Transverse colon (tissue), 4 donors: ENCODE measurements at regions of chr1 and their contacts with region 1.

Region 1: DNA sequence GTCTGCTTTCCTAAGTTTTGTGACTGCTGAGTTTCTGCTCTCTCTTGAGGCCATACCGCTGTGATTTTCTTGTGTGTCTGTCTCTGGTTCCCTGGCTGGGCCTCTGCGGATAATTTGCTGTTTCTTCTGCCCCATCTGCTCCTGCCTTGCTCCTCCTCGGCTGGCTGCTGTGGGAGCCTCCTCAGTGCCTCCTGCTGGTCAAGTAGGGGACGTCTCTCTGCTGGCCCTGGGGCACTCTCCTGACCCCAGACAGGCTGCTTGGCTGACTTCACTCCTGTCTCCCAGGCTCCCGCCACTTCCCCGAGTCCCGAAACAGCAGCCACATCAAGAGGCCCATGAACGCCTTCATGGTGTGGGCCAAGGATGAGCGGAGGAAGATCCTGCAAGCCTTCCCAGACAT is 28.5 kb downstream of the ETNK2 start:
- DNase-seq: peak; percentile 27
- H3K4me3 ChIP-seq: no peak overlapping the region
- H3K27ac ChIP-seq: no peak overlapping the region
- H3K4me1 ChIP-seq: peaks cover 0 to 15% (median 5%) of the 10 kb centered on the region in 4 donors
- H3K27me3 ChIP-seq: no peaks in the 10 kb centered on the region
- CTCF ChIP-seq: peak in 4 of 5 experiments; percentile 31 to 50 (median 37)
- EP300 ChIP-seq: no peak
- POLR2A ChIP-seq: no peak

Region 2: DNA sequence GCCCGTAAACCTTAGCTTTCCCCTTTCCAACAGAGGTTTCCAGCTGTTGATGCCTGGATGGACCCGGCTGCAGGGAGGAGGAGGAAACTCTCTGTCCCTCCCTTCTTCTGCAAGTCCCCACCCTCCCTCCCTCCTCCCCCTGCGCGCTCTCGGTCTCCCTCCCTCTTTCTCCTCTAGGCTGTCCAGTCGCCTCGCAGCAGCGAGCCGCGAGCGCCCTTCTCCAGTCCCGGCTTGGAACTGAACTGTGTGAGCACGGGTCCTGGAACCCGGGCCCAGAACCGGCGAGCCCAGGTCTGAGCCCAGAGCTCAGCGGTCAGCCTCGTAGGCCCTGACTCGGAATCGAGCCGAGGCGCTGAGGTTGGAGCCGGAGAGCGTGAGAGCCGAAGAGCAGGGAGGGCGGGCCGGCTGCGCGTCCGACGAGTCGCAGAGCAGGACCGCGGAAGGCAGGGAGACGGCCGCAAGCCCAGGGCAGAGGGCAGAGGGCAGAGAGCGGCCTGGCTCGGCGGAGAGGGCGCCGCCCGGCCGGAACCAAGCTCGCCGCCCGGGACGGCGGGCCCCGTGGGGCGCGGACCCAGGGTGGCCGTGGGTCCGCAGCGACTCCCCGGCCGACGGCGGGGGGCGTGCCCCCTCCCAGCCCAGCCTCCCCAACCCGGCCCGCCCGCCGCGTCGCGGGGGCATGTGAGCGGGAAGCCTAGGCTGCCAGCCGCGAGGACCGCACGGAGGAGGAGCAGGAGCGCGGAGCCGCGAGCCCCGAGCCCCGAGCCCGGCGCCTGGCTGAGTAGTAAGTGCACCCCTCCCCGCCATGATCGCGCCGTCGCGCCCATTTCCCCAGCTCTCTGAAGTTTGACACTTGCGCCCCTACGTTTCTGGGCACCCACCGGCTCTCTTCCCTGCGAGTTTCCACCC is 50.2 kb before region 1 on chr1 and contains the start of gene SOX13:
- in situ Hi-C with region 1: loop called in 2 of 4 experiments (anchors 5 to 10 kb)
- intact Hi-C with region 1: loop called (anchors 5 kb)
- DNase-seq: peak; percentile 92
- H3K4me3 ChIP-seq: peak within 1 kb of the TSS; percentile 65 to 74 (median 67)
- H3K27ac ChIP-seq: peak within 1 kb of the TSS; percentile 88 to 98 (median 94)
- H3K4me1 ChIP-seq: peaks cover 7 to 41% (median 30%) of the 10 kb centered on the region in 4 donors
- H3K27me3 ChIP-seq: peaks cover 4% of the 10 kb centered on the region
- CTCF ChIP-seq: peak in 1 of 5 experiments; percentile 48
- EP300 ChIP-seq: no peak
- POLR2A ChIP-seq: peak; percentile 96
- total RNA-seq, gene SOX13: 12.1 to 34.1 (median 33.4) TPM